GM18951 (cell line): ENCODE measurements at regions of chr5 and their contacts with region 1.

Region 1: GRCh38 chr5:178075840-178076548 is 37.3 kb upstream of the N4BP3 start:
- POLR2A ChIP-seq: no peak

Region 2: GRCh38 chr5:178146020-178146820 is 70.2 kb after region 1 on chr5:
- in situ Hi-C with region 1: loop called (anchors 5 kb)
- POLR2A ChIP-seq: no peak